ENCODE measurements at regions of chr4 and their contacts with region 1.

Region 1: DNA sequence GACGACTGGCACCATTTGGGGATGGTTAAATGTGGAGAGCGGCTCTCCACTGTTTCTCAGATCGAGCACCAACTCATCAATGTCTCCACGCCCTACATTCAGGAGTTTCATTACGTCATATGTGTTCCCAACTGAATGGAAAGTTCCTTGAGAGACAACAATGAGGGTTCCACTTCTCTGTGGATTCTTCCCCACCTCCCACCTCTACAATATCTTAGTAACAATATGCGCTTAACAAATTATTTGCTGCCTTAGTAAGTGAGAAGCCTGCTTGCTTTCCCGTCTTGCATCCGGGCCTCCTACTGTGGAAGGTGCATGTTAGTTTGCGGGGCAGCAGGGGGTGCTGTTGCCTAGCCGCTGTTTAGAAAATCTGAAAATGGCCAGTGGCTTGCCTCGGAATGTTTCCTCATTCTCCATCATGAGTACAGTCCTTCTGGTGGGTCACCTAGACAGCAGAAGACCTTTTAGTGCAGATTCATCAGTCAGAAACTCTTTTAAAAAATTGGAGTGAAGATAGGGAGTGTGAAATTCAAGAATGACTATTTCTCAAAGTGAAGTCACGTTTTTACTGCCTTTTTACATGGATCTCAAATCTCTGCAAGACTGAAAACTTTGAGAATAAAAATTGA is 55.7 kb downstream of the PHOX2B start:
- DNase-seq: peak in 9 of 10 donors; percentile 16 to 70 (median 49)
- H3K4me3 ChIP-seq: no peak overlapping the region
- H3K27ac ChIP-seq: peak overlapping the region in 49 of 59 donors; percentile 0 to 75 (median 38)
- H3K27me3 ChIP-seq: no peaks in the 10 kb centered on the region
- CTCF ChIP-seq: peak; percentile 61 to 93 (median 85)

Region 2: DNA sequence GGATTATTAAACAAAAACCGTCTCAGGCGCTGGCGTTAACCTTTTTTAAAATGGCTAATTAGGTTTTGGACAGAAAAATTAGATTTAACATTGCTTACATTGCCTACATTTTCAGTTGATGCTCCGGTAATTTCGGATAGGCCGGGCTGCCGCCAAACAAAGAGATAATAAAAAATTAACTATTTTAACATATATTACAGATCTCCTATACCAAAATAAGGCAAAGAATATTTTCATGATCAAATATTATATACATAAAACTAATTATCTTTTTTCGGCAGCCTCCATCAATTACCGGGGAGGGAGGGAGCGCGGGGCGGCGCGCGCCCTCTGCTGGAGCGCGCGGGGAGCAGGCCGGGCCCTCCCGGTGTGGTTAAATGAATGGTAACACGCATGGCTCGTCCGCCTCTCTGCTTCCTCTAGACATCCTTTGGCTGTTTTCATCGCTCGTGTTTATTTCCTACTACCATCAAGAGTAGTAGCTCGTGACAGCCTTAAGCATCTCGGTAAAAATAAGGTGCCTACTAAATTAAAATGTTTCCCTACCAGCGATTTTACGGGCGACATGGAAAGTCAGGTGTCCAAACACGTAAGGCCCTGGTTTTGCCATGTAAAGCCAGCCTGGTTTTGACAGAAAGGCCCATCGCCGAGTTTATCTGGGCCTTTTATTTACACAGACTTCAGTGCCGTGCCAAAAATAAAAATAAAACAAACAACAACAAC is 190.0 kb after region 1 on chr4:
- intact Hi-C with region 1: loop called (anchors 5 kb)
- DNase-seq: peak in 2 of 10 donors; percentile 38 to 49
- H3K4me3 ChIP-seq: peak overlapping the region in 58 of 59 donors; percentile 19 to 68 (median 50)
- H3K27ac ChIP-seq: no peak overlapping the region
- H3K27me3 ChIP-seq: peaks cover 17 to 75% (median 54%) of the 10 kb centered on the region in 45 donors
- CTCF ChIP-seq: peak; percentile 54 to 92 (median 80)

Region 3: DNA sequence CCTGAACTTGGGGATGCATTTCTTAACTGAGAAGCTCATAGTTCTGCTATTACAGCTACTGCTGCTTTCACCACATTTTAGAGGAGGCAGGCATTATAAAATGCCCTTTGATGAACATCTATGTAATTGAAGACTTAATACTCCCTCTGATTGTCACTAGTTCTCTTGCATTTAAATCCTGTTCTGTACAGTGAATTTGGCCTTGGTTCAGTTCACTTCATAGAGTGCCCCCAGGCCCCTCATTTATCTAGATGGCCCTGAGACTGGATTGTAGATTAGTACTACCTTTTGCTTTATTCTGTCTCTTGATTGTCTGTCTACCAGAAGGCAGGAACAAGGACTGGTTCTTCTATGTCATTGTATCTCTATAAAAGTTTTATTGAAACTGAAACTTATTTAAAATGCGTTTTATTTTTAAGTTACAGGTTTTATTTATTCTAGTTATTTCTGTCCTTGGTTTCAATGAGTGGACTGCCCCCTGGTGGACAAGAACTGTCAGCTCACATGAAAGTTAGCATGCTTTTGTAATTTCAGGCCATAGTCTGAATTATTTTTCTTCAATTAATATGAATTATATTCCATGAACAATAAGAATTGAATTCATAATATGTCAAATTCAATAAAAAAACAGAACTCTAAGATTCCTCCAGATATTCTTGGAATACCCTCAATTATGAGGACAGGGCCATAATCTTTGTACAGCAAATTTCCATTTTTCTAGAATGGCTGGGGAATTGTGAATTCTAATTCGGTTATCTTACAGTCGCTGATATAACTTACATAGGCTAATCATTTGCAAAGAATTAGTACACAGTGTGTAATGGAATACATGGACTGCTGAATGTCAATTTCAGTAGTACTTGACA is 195.2 kb after region 1 on chr4:
- intact Hi-C with region 1: loop called (anchors 5 kb)
- DNase-seq: peak in 5 of 10 donors; percentile 39 to 72 (median 54)
- H3K4me3 ChIP-seq: no peak overlapping the region
- H3K27ac ChIP-seq: no peak overlapping the region
- H3K27me3 ChIP-seq: peaks cover 0 to 23% (median 6%) of the 10 kb centered on the region in 45 donors
- CTCF ChIP-seq: peak; percentile 83 to 98 (median 93)

Measured in dorsolateral prefrontal cortex (tissue), 120 donors.